SK-N-SH (cell line): ENCODE measurements at regions of chr3 and their contacts with region 1.

Region 1: DNA sequence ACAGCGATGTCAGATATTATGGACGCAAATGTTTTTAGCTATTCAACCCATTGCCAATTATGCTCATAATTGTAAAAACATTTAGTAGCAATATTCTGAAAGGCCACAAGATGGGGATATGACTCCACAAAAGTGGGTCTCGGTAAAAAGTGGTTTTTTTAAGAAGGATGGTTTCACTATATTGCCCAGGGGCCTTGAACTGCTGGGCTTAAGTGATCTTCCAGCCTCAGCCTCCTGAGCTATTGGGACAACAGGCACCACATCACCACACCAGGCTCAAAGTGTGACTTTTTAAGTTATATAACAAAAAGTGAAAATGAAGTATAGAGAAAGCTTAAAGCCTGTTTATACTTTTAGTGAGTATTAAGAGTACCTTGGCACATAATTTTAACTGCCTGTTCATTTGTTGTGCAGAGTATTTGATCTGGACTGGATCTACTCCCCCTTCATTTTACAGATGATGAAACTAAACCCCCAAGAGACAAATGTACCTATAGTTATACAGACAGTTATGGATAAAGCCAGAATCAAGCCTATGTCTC is 9.4 kb downstream of the NAA50 start:
- DNase-seq: peak; percentile 52
- H3K4me3 ChIP-seq: peak overlapping the region in 1 of 2 experiments; percentile 27; a peak in 1 of 4 replicates
- H3K27ac ChIP-seq: peak overlapping the region; percentile 42 to 50
- H3K4me1 ChIP-seq: no peaks in the 10 kb centered on the region; a peak in 2 of 4 replicates
- H3K27me3 ChIP-seq: no peaks in the 10 kb centered on the region
- CTCF ChIP-seq: peak; percentile 74
- EP300 ChIP-seq: no peak
- RAD21 ChIP-seq: peak; percentile 88

Region 2: DNA sequence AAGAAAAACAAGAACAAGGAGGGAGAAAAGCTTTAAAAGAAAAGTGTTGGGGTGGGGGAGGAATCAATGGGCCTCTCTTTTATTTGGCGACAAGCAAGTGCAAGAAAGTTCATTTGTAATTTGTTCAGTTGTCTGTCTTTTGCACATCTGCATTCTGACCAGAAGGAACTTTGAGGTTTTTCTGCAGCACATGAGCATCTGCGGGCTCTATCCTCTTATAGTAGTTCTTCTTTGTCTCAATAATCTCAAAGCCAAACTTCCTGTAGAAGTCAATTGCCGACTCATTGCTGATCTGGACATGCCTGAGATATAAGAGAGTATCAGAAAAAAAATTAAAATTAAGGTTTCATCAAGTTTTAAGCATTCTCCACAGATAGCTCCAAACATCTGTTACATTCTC is 15.0 kb before region 1 on chr3:
- CTCF ChIA-PET with region 1: interaction called, 16 read pairs
- POLR2A ChIA-PET with region 1: no interaction called
- DNase-seq: no peak
- H3K4me3 ChIP-seq: no peak overlapping the region
- H3K27ac ChIP-seq: no peak overlapping the region
- H3K4me1 ChIP-seq: peaks cover 0 to 5% of the 10 kb centered on the region in 2 experiments; a peak in 1 of 4 replicates
- H3K27me3 ChIP-seq: no peaks in the 10 kb centered on the region
- CTCF ChIP-seq: no peak
- EP300 ChIP-seq: no peak
- RAD21 ChIP-seq: no peak

Region 3: GRCh38 chr3:113751141-113751540 is 14.5 kb after region 1 on chr3:
- CTCF ChIA-PET with region 1: interaction called, 42 read pairs
- POLR2A ChIA-PET with region 1: no interaction called
- DNase-seq: no peak
- H3K4me3 ChIP-seq: no peak overlapping the region
- H3K27ac ChIP-seq: no peak overlapping the region
- H3K4me1 ChIP-seq: peaks cover 0 to 10% of the 10 kb centered on the region in 2 experiments; a peak in 2 of 4 replicates
- H3K27me3 ChIP-seq: no peaks in the 10 kb centered on the region
- CTCF ChIP-seq: no peak
- EP300 ChIP-seq: no peak
- RAD21 ChIP-seq: no peak